HepG2 (cell line): ENCODE measurements at regions of chr2 and their contacts with region 1.

Region 1: GRCh38 chr2:64330281-64331113 is 123.5 kb upstream of the LGALSL start:
- DNase-seq: peak; percentile 80
- ATAC-seq: peak; percentile 86
- H3K4me3 ChIP-seq: no peak overlapping the region
- H3K27ac ChIP-seq: no peak overlapping the region
- H3K4me1 ChIP-seq: no peaks in the 10 kb centered on the region
- H3K27me3 ChIP-seq: peaks cover 0 to 41% of the 10 kb centered on the region in 2 experiments; a peak in 3 of 5 replicates
- CTCF ChIP-seq: peak; percentile 96
- EP300 ChIP-seq: no peak
- POLR2A ChIP-seq: no peak
- RAD21 ChIP-seq: peak; percentile 95

Region 2: GRCh38 chr2:64045938-64046337 is 284.6 kb before region 1 on chr2:
- CTCF ChIA-PET with region 1: interaction called, 4 read pairs
- POLR2A ChIA-PET with region 1: no interaction called
- in situ Hi-C with region 1: loop called (anchors 5 kb)
- intact Hi-C with region 1: loop called (anchors 1 kb)
- DNase-seq: no peak
- ATAC-seq: no peak
- H3K4me3 ChIP-seq: no peak overlapping the region
- H3K27ac ChIP-seq: no peak overlapping the region
- H3K4me1 ChIP-seq: peaks cover 10% of the 10 kb centered on the region
- H3K27me3 ChIP-seq: no peaks in the 10 kb centered on the region
- CTCF ChIP-seq: no peak
- EP300 ChIP-seq: no peak
- POLR2A ChIP-seq: no peak
- RAD21 ChIP-seq: no peak

Region 3: DNA sequence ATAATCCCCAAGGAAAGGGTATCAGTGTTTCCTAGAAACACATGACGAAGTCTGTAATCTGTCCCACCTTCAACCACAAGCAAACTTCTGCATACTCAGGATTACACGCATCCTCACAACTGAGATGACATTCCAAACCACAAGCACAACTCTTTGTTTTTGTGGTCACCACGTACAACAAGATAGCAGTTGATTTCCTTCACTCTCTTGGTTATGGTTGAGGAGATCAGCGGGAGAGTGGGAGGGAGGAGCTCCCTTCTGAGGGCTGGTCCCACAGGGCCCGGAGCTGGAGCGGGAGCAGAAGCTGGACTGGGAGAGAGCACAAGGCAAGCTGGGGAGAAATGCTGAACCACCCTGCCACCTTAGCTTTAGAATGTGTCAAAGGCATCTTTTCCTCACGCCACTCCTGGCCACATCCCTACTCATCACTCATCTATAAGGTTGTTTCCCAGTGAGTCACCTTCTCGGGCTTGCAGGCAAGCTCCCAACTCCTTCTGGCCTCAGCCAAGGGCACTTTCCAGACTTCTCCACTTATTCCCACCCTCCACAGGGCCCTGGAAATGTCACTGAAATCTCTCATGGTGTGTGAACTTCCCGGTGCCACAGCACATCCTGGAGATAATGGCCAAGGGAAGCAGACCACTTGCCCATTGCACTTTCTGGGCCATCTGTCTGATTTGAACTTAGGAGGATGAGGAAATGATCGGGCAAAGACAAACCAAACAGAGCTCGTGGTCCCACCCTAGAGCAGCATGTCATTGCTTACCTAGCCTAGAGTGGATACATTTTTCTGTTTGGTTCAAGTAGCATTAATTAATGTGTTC is 24.6 kb after region 1 on chr2:
- CTCF ChIA-PET with region 1: no interaction called
- POLR2A ChIA-PET with region 1: no interaction called
- in situ Hi-C with region 1: no loop called
- intact Hi-C with region 1: no loop called
- DNase-seq: no peak
- ATAC-seq: no peak
- H3K4me3 ChIP-seq: no peak overlapping the region
- H3K27ac ChIP-seq: no peak overlapping the region
- H3K4me1 ChIP-seq: no peaks in the 10 kb centered on the region
- H3K27me3 ChIP-seq: peaks cover 0 to 27% of the 10 kb centered on the region in 2 experiments; a peak in 3 of 5 replicates
- CTCF ChIP-seq: no peak
- EP300 ChIP-seq: no peak
- POLR2A ChIP-seq: no peak
- RAD21 ChIP-seq: no peak

Region 4: GRCh38 chr2:64447317-64448040 is 117.0 kb after region 1 on chr2:
- CTCF ChIA-PET with region 1: no interaction called
- POLR2A ChIA-PET with region 1: no interaction called
- in situ Hi-C with region 1: no loop called
- intact Hi-C with region 1: no loop called
- DNase-seq: no peak
- ATAC-seq: no peak
- H3K4me3 ChIP-seq: no peak overlapping the region
- H3K27ac ChIP-seq: no peak overlapping the region
- H3K4me1 ChIP-seq: peaks cover 4% of the 10 kb centered on the region
- H3K27me3 ChIP-seq: no peaks in the 10 kb centered on the region
- CTCF ChIP-seq: no peak
- EP300 ChIP-seq: no peak
- POLR2A ChIP-seq: no peak
- RAD21 ChIP-seq: no peak

Region 5: GRCh38 chr2:64488050-64488974 is 157.8 kb after region 1 on chr2:
- CTCF ChIA-PET with region 1: interaction called, 86 read pairs
- POLR2A ChIA-PET with region 1: no interaction called
- in situ Hi-C with region 1: loop called (anchors 5 kb)
- intact Hi-C with region 1: loop called (anchors 1 kb)
- DNase-seq: peak; percentile 47
- ATAC-seq: peak; percentile 81
- H3K4me3 ChIP-seq: peak overlapping the region in 2 of 3 experiments; percentile 30 to 53; a peak in 3 of 6 replicates
- H3K27ac ChIP-seq: no peak overlapping the region
- H3K4me1 ChIP-seq: peaks cover 6% of the 10 kb centered on the region
- H3K27me3 ChIP-seq: peaks cover 7 to 48% of the 10 kb centered on the region in 2 experiments
- CTCF ChIP-seq: peak; percentile 81
- EP300 ChIP-seq: no peak
- POLR2A ChIP-seq: no peak
- RAD21 ChIP-seq: peak; percentile 77

Region 6: DNA sequence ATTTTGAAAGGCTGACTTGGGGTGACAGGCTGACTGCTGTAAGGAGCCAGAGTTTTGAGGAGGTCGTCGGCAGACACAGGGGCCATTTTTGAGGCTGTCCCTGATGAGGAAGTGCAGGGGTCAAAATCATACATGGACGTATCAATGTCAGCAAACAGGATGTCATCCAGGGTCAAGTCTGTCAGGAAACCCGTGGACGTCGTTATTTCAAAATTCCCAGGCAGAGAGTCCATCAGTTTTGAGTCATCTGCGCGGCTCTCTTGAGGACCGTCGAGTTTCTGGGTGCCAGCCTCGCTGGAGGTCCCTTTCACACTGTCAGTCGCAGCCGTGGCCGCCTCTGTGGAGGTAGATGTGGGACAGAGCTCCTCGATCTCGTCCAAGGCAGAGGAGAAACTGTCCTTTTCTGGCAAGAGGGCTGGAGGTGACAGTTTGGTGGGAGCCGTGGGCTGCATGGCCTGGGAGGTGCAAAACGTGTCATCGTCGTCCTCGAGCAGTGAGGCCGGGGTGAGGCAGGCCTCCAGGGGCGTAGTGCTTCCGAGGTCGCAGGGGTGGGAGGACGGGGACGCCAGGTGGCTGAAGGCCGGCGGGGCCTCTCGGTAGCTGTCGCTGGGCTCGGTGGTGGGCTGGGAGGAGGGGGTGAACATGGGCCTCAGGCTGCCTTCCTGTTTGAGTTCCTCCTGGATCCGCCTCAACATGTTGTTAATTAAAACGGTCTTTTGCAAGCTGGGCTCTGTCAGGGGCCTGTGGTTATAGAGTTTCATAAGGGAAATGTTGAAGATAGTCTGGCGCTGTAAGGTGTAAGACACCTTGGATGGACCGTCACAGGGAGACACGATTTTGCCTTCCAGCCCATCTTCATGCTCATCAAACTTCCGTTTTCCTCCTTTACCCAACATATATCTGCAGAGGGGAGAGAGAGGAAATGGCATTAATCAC is 305.7 kb after region 1 on chr2:
- CTCF ChIA-PET with region 1: no interaction called
- POLR2A ChIA-PET with region 1: no interaction called
- in situ Hi-C with region 1: loop called (anchors 10 kb)
- intact Hi-C with region 1: no loop called
- DNase-seq: no peak
- ATAC-seq: no peak
- H3K4me3 ChIP-seq: no peak overlapping the region
- H3K27ac ChIP-seq: no peak overlapping the region
- H3K4me1 ChIP-seq: peaks cover 39% of the 10 kb centered on the region
- H3K27me3 ChIP-seq: no peaks in the 10 kb centered on the region
- CTCF ChIP-seq: no peak
- EP300 ChIP-seq: no peak
- POLR2A ChIP-seq: no peak
- RAD21 ChIP-seq: no peak

Region 7: DNA sequence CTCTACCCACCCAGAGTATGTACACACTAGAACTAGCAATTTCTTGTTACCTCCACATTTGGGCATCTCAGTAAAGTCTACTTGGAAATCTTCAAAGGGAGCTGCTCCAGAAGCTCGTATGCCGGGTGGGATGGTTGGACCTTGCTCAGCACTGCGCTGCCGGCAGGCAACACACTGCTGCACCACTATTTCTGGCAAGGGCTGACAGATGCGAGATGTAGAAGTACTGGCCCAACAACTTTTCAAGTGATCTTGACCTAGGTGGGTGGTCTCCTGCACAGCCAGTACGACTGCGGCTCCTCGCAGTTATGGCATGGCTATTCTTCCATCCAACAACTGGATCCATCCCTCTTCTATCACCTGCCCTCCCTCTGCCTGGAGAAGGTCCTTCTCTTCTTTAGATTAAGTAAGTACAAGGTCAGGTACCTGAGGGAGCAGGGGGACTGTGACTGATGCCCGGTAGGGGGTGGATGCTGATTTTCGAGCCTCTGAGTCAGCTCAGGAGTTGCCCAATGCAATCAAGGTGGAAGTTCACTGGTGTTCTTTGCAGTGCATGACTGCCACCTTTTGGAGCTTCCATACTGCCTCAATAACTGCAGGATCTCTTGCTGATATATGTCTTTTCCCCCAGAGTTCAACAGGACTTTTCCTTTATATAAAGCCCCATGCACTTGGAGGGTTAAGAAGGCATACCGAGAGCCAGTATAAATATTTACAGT is 558.3 kb after region 1 on chr2:
- CTCF ChIA-PET with region 1: no interaction called
- POLR2A ChIA-PET with region 1: no interaction called
- in situ Hi-C with region 1: loop called (anchors 10 kb)
- intact Hi-C with region 1: no loop called
- DNase-seq: peak; percentile 74
- ATAC-seq: peak; percentile 97
- H3K4me3 ChIP-seq: no peak overlapping the region
- H3K27ac ChIP-seq: no peak overlapping the region
- H3K4me1 ChIP-seq: no peaks in the 10 kb centered on the region; the same call in 1 of the 2 replicates
- H3K27me3 ChIP-seq: peaks cover 0 to 9% of the 10 kb centered on the region in 2 experiments; a peak in 1 of 5 replicates
- CTCF ChIP-seq: peak; percentile 71
- EP300 ChIP-seq: peak in 1 of 2 experiments; percentile 45; a peak in 1 of 4 replicates
- POLR2A ChIP-seq: no peak
- RAD21 ChIP-seq: peak; percentile 75